ENCODE measurements at regions of chr5 and their contacts with region 1.

Region 1: DNA sequence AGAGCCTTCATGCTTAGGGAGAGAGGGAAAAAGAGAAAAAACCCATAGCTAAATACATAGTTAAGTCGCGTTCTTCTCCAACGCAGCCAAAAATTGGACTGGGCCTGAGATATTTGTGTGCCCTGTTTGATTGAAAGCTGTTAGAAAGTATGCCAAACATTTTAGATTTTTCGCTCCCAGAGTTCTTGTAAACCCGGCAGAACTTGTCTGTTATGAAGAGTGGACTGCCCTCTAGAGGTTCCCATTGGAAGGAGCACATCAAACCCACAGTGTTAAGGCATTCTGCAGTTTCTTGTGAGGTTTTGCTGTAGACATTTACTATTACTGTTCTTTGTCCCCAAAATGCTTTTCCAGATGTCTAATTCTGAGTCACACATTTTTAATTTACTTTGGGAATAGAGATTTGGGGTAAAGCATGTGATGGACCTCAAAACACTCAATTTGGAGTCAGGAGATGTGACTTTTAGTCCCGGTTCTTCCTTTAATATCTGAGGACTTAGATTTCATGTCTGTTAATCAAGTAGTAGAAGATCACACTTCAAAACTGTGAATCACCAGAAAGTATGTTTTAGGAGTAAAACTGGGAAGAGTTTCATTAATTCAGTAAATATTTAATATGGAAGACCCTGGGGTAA is 96.6 kb downstream of the PCSK1 start:
- DNase-seq: peak; percentile 81
- H3K4me3 Mint-ChIP-seq: no peak overlapping the region
- H3K27ac Mint-ChIP-seq: no peak overlapping the region
- H3K4me1 Mint-ChIP-seq: peaks cover 18% of the 10 kb centered on the region
- H3K27me3 Mint-ChIP-seq: peaks cover 16% of the 10 kb centered on the region

Region 2: GRCh38 chr5:95664204-95664786 is 672.2 kb before region 1 on chr5:
- CTCF ChIA-PET with region 1: no interaction called
- intact Hi-C with region 1: loop called (anchors 1 kb)
- DNase-seq: peak; percentile 63
- H3K4me3 Mint-ChIP-seq: no peak overlapping the region
- H3K27ac Mint-ChIP-seq: no peak overlapping the region
- H3K4me1 Mint-ChIP-seq: no peaks in the 10 kb centered on the region
- H3K27me3 Mint-ChIP-seq: no peaks in the 10 kb centered on the region

Region 3: GRCh38 chr5:95853490-95853889 is 483.0 kb before region 1 on chr5:
- CTCF ChIA-PET with region 1: interaction called, 46 read pairs
- intact Hi-C with region 1: loop called (anchors 1 kb)
- DNase-seq: no peak
- H3K4me3 Mint-ChIP-seq: no peak overlapping the region
- H3K27ac Mint-ChIP-seq: no peak overlapping the region
- H3K4me1 Mint-ChIP-seq: peaks cover 7% of the 10 kb centered on the region
- H3K27me3 Mint-ChIP-seq: no peaks in the 10 kb centered on the region

Region 4: GRCh38 chr5:95892780-95893354 is 443.6 kb before region 1 on chr5:
- CTCF ChIA-PET with region 1: interaction called, 7 read pairs
- intact Hi-C with region 1: loop called (anchors 1 kb)
- DNase-seq: peak; percentile 53
- H3K4me3 Mint-ChIP-seq: no peak overlapping the region
- H3K27ac Mint-ChIP-seq: no peak overlapping the region
- H3K4me1 Mint-ChIP-seq: peaks cover 11% of the 10 kb centered on the region
- H3K27me3 Mint-ChIP-seq: no peaks in the 10 kb centered on the region

Region 5: DNA sequence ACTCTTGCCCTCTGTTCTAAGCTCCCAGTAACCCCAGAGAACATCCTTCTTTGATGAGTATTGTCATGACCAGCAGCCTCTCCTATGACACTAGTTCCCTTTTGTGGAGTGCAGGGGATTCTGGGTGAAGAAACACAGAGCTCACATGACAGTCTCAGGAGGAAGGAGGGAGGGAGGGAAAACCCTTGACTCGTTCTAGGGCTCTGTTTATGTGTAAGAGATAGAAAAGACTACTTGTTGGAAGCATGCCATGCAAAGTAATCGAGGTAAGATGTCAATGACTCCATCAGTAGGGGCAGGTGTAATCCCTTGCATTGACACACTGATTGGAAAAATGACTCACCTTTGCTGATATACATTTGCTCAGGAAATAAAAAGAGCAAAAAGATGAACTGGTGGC is 184.6 kb before region 1 on chr5:
- CTCF ChIA-PET with region 1: interaction called, 4 read pairs
- intact Hi-C with region 1: loop called (anchors 2 kb)
- DNase-seq: peak; percentile 63
- H3K4me3 Mint-ChIP-seq: no peak overlapping the region
- H3K27ac Mint-ChIP-seq: peak overlapping the region; percentile 10
- H3K4me1 Mint-ChIP-seq: peaks cover 6% of the 10 kb centered on the region
- H3K27me3 Mint-ChIP-seq: no peaks in the 10 kb centered on the region

Region 6: GRCh38 chr5:96714951-96715451 is 378.5 kb after region 1 on chr5:
- CTCF ChIA-PET with region 1: no interaction called
- intact Hi-C with region 1: no loop called
- DNase-seq: peak; percentile 48
- H3K4me3 Mint-ChIP-seq: no peak overlapping the region
- H3K27ac Mint-ChIP-seq: no peak overlapping the region
- H3K4me1 Mint-ChIP-seq: peaks cover 20% of the 10 kb centered on the region
- H3K27me3 Mint-ChIP-seq: no peaks in the 10 kb centered on the region

Region 7: GRCh38 chr5:96734871-96735325 is 398.4 kb after region 1 on chr5:
- CTCF ChIA-PET with region 1: no interaction called
- intact Hi-C with region 1: no loop called
- DNase-seq: no peak
- H3K4me3 Mint-ChIP-seq: no peak overlapping the region
- H3K27ac Mint-ChIP-seq: no peak overlapping the region
- H3K4me1 Mint-ChIP-seq: peaks cover 7% of the 10 kb centered on the region
- H3K27me3 Mint-ChIP-seq: no peaks in the 10 kb centered on the region